Sigmoid colon (tissue), 7 donors: ENCODE measurements at regions of chr12 and their contacts with region 1.

Region 1: GRCh38 chr12:17192721-17193120 is 586.8 kb upstream of the LMO3 start:
- DNase-seq: no peak
- H3K4me3 ChIP-seq: no peak overlapping the region
- H3K27ac ChIP-seq: no peak overlapping the region
- H3K4me1 ChIP-seq: no peaks in the 10 kb centered on the region
- H3K27me3 ChIP-seq: no peaks in the 10 kb centered on the region
- CTCF ChIP-seq: no peak
- EP300 ChIP-seq: no peak
- POLR2A ChIP-seq: no peak

Region 2: GRCh38 chr12:17239870-17240269 is 47.1 kb after region 1 on chr12:
- intact Hi-C with region 1: loop called (anchors 2 kb)
- DNase-seq: no peak
- H3K4me3 ChIP-seq: no peak overlapping the region
- H3K27ac ChIP-seq: no peak overlapping the region
- H3K4me1 ChIP-seq: no peaks in the 10 kb centered on the region
- H3K27me3 ChIP-seq: no peaks in the 10 kb centered on the region
- CTCF ChIP-seq: no peak
- EP300 ChIP-seq: no peak
- POLR2A ChIP-seq: no peak